GM23248 (cell line): ENCODE measurements at regions of chr11 and their contacts with region 1.

Region 1: DNA sequence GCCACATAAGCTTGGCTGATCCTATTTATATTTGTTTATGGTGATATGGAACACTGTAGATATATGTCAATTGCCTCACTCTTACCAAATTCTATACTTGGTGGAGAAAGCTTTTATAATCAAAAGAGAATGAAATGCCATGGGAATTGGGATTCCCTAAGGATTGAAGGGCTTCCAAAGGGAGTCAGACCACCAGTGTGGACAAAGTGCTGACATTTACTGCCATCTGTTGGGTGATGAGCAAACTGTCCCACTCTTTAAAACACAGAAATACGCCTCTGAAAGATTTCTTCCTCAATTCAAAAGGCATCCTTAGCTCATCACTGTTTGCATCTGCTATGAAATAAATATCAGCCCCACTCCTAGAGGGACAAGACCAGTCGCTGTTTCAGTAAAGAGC is 7.1 kb downstream of the SLC1A2 start:
- DNase-seq: peak; percentile 39
- H3K4me3 ChIP-seq: no peak overlapping the region
- H3K27ac ChIP-seq: no peak overlapping the region
- H3K4me1 ChIP-seq: no peaks in the 10 kb centered on the region
- H3K27me3 ChIP-seq: no peaks in the 10 kb centered on the region

Region 2: GRCh38 chr11:34926101-34926830 is 486.0 kb before region 1 on chr11:
- in situ Hi-C with region 1: loop called (anchors 10 kb)
- DNase-seq: peak; percentile 80
- H3K4me3 ChIP-seq: peak overlapping the region; percentile 35
- H3K27ac ChIP-seq: peak overlapping the region; percentile 41
- H3K4me1 ChIP-seq: peaks cover 50% of the 10 kb centered on the region
- H3K27me3 ChIP-seq: no peaks in the 10 kb centered on the region

Region 3: GRCh38 chr11:35845860-35846259 is 433.6 kb after region 1 on chr11:
- in situ Hi-C with region 1: no loop called
- DNase-seq: peak; percentile 8
- H3K4me3 ChIP-seq: no peak overlapping the region
- H3K27ac ChIP-seq: no peak overlapping the region
- H3K4me1 ChIP-seq: no peaks in the 10 kb centered on the region
- H3K27me3 ChIP-seq: peaks cover 39% of the 10 kb centered on the region